ENCODE measurements at regions of chr3 and their contacts with region 1.

Region 1: DNA sequence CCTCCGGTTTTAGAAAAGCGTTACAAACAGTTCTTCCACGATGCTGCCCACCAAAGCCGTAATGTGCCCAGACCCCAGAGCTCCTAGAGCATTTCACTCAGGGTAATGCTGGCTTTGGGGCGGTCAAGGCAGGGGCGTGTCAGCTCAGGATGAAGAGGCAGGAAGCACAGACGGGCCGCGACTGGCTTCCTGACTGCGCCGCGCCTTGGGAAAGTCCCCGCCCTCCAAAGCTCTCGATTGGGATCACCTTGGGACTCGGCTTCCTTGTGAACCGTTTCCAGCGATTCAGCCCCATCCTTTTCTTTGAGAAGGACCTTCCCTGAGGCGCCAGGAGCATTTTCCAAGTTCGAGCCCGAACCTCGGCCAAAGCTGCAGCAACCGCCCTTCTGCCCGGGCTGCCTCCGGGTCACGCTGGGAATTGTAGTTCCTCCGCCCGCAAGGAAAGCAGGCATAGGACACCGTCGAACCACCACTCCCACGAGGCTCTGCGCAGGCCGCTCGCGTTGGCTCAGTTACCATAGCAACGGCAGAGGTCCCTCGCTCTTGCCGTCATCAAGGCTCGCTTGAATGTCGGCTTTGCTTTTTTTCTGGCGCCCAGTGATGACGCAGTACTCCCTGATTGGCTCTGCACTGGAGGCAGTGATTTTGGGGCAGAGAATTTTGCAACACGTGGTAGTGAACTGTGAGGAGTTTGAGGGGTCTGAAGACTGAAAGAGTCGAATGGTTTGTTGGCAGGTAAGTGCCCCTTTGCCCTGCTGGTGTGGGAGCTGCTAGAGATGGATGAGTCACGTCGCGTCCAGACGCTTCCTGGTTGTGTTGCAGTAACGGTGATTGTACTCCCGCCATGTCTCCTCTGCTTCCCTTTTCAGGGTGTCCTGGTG is at the starts of genes CCDC191 and QTRT2:
- ATAC-seq: peak; percentile 95 to 99 (median 99)
- H3K4me3 ChIP-seq: peak within 1 kb of the TSS; percentile 59 to 91 (median 86)
- H3K27ac ChIP-seq: peak within 1 kb of the TSS in 1 of 2 donors; percentile 68
- H3K4me1 ChIP-seq: peaks cover 8 to 10% of the 10 kb centered on the region in 2 donors
- total RNA-seq, gene CCDC191: 2.9 to 15.6 (median 7.6) TPM
- total RNA-seq, gene QTRT2: 9.2 to 33.2 (median 18.6) TPM

Region 2: GRCh38 chr3:113649174-113649845 is 407.1 kb before region 1 on chr3:
- in situ Hi-C with region 1: no loop called
- ATAC-seq: no peak
- H3K4me3 ChIP-seq: no peak overlapping the region
- H3K27ac ChIP-seq: no peak overlapping the region
- H3K4me1 ChIP-seq: no peaks in the 10 kb centered on the region

Region 3: DNA sequence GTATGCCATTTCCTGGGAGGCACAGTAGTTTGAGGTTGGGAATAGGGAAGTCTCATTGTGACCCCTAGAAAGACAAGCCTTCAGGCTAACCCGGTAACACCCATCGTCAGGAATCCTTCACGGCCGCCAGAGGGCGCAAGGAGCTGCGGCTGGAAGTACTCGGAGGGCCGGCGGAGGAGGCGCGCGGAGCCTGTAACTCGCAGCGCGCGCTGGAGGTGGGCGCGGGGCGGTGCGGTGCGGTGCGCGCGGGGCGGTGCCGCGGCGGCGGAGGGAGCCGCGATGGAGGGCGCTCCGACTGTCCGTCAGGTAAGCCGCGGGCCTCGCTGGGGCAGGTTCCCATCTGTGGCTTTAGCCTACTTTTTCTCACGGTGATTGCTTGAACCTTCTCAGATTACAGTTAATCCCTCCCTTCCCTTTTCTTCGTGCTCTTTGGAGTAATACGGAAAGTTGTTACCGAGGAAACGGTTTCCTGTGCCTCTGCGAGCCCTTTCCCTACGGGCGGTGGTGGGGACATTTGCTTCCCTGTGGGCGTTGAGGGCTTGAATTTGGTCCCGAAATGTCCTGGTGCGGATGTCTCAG is 217.7 kb before region 1 on chr3 and contains the start of gene GRAMD1C:
- in situ Hi-C with region 1: loop called in 1 of 9 experiments (anchors 25 kb)
- ATAC-seq: peak; percentile 97 to 100 (median 99)
- H3K4me3 ChIP-seq: peak within 1 kb of the TSS; percentile 40 to 76 (median 50)
- H3K27ac ChIP-seq: no peak within 1 kb of the TSS
- H3K4me1 ChIP-seq: no peaks in the 10 kb centered on the region
- total RNA-seq, gene GRAMD1C: 0.45 to 6.1 (median 2.6) TPM

Region 4: DNA sequence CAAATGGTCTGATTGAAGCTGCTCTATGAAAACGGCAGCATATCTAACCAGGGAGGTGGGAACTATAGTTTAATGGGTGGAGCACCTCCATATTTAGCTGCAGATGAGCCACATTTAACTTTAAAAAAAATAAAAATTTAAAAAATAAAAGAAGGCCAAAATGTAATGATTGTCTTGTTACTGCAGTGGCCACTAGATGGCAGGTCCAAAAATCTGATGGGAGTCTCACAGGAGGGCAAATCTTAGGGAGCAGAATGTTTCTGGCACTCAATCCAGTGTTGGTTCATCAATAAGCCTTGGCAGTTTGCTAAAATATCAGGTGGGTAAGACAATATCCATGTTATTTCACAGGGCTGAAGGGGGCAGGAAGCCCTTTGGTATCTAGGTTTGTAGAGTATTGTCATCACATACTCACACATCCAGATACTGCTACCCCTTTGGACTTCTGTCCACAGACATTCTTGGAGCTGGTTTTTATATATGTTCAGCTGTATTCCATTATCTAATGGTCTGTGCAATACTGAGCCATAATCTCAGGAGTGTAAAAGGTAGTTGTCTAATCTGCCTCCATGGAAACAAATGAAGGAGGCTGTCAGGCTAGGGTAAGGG is 470.8 kb after region 1 on chr3:
- in situ Hi-C with region 1: no loop called
- ATAC-seq: peak in 3 of 8 experiments; percentile 42 to 69 (median 57)
- H3K4me3 ChIP-seq: no peak overlapping the region
- H3K27ac ChIP-seq: no peak overlapping the region
- H3K4me1 ChIP-seq: no peaks in the 10 kb centered on the region

Region 5: DNA sequence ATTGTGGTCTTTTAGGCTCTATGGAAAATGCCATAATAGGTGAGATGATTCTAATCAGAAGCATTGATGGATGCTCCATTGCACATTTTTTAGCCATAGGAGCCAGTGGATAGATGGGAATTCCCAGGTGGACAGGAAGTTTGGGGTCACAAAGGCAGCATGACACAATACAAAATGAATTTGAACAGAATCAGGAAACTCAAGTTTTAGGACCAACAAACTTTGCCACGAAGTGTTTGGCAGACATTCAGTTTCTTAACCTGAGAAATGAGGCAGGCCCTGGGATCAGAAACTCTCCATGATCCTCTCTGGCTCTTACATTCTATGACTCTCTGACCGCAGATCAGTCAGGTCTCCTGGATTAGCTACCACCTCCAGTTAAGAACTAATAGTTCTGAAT is 512.8 kb after region 1 on chr3:
- in situ Hi-C with region 1: no loop called
- ATAC-seq: no peak
- H3K4me3 ChIP-seq: no peak overlapping the region
- H3K27ac ChIP-seq: no peak overlapping the region
- H3K4me1 ChIP-seq: peaks cover 9 to 11% of the 10 kb centered on the region in 2 donors